GM12878 (cell line): ENCODE measurements at regions of chr2 and their contacts with region 1.

Region 1: GRCh38 chr2:109663721-109664120 is 49.6 kb downstream of the SOWAHC start:
- DNase-seq: no peak
- ATAC-seq: no peak
- H3K4me3 ChIP-seq: no peak overlapping the region
- H3K27ac ChIP-seq: no peak overlapping the region
- H3K4me1 ChIP-seq: no peaks in the 10 kb centered on the region
- H3K27me3 ChIP-seq: no peaks in the 10 kb centered on the region
- CTCF ChIP-seq: no peak
- EP300 ChIP-seq: no peak
- POLR2A ChIP-seq: no peak
- RAD21 ChIP-seq: no peak

Region 2: DNA sequence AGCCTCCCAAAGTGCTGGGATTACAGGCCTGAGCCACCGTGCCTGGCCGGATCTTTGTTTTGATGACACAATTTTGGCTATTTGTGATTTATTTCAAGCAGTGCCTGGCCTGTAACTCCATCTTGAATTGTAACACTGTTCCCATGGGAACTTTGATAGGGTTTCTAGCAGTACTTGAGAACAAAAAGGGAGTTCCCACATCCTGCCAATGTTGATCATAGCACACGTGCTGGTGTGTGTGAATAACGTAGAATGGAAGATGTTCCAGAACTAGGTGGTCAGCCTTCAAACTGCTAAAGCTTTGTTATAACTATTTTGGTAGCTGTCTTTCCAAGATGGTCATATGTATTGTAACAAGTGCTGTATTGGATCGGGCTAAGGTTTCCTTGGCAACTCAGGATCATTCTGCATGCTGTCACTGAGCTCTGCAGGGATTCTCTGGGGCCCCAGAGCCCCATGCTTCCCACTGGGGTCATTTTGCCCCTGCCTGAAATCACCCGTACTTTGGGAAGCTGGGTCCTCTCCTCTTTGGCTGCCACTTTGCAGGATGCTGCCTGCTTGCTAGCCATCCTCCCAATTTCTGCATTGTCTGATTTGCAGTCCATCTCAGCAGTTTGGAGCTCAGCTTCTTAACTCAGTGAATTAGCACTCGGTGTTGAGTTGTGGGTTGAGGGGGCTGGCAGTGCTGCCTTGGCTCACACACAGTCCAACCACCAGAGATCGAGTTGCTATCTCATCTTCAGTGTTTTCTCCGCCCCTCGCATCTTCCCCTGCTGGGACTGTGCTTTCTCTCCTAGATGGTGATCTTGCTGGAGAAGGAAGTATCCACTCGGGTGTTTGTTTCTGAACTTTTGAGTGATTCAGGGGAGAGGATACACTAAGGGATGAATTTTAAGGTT is 507.9 kb before region 1 on chr2:
- CTCF ChIA-PET with region 1: no interaction called
- POLR2A ChIA-PET with region 1: no interaction called
- RAD21 ChIA-PET with region 1: no interaction called
- SMC1A ChIA-PET with region 1: no interaction called
- in situ Hi-C with region 1: no loop called
- intact Hi-C with region 1: no loop called
- DNase-seq: no peak
- ATAC-seq: no peak
- H3K4me3 ChIP-seq: no peak overlapping the region
- H3K27ac ChIP-seq: no peak overlapping the region
- H3K4me1 ChIP-seq: no peaks in the 10 kb centered on the region
- H3K27me3 ChIP-seq: no peaks in the 10 kb centered on the region
- CTCF ChIP-seq: no peak
- EP300 ChIP-seq: no peak
- POLR2A ChIP-seq: no peak
- RAD21 ChIP-seq: no peak

Region 3: DNA sequence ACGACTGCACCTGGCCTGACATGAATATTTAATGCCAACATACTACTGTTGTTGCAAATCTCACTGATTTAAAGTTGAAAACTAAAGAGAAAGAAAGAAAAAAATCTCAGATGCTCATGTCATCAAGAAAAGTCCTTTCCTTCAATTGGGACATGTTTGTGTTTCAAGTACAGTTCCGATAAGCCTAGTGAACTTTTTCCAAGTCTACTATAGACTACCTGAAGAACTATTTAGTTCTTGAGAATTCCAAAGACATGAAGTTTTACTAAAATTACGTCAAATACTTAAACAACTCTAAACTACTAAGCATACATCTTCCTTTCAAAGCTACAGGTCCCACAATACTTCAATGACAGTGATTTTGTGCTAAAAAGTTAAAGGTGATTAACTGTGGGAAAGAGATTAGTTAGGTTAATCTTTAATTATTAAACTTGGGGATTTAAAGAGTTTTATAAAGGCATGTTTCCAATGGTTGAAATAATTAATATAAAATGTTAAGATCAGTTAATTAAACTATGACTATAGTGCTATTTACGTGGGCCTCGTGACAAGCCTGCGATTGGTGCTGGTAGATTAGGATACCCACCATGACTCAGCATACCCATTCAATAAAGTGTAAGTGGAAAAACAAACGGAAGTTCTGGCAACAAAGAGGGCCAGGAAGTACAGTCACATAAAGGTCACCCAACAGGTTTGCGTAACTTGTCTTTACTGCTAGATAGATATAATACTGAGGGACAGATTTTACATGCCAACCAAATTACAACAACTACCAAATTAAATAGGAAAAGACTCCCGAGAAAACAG is 105.4 kb before region 1 on chr2:
- CTCF ChIA-PET with region 1: no interaction called
- POLR2A ChIA-PET with region 1: no interaction called
- RAD21 ChIA-PET with region 1: no interaction called
- SMC1A ChIA-PET with region 1: interaction called, 11 read pairs
- in situ Hi-C with region 1: no loop called
- intact Hi-C with region 1: no loop called
- DNase-seq: no peak
- ATAC-seq: no peak
- H3K4me3 ChIP-seq: no peak overlapping the region
- H3K27ac ChIP-seq: no peak overlapping the region
- H3K4me1 ChIP-seq: no peaks in the 10 kb centered on the region; the same call in 1 of the 2 replicates
- H3K27me3 ChIP-seq: no peaks in the 10 kb centered on the region
- CTCF ChIP-seq: no peak
- EP300 ChIP-seq: no peak
- POLR2A ChIP-seq: no peak
- RAD21 ChIP-seq: no peak

Region 4: DNA sequence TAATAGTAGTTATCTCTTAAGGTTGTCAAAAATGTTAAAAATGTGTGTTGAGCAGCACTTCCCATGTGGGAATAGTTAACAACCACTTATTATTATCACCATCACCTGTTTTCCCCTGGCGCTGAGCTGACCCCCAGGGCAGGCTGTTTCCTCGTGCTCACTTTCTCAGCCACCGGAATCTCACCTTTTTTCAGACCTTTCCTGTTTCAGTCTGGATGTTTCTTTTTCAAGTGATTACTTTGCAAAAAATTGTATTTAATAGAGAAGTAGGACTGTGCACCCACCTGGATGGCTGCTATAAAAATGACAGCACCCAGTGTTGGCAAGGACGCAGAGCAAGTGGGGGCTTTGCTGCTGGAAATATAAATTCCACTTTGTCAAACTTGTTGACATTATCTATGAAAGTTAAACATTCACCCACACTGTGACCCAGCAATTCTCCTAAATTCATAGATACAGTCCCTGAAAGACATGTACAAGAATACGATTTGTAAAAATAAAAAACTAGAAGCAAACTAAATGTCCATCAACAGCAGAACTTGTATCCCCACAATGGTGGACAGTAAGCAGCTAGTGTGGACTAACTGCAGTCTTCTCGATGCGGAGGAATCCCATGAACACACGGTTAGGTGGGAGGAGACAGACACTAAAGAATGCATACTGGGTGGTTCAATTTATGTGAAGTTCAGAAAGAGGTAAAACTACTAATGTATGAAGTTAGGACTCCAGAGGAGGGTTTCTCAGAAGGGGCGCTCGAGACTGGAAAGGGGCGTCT is 17.0 kb after region 1 on chr2:
- CTCF ChIA-PET with region 1: no interaction called
- POLR2A ChIA-PET with region 1: no interaction called
- RAD21 ChIA-PET with region 1: no interaction called
- SMC1A ChIA-PET with region 1: no interaction called
- in situ Hi-C with region 1: no loop called
- intact Hi-C with region 1: no loop called
- DNase-seq: no peak
- ATAC-seq: no peak
- H3K4me3 ChIP-seq: no peak overlapping the region
- H3K27ac ChIP-seq: no peak overlapping the region
- H3K4me1 ChIP-seq: no peaks in the 10 kb centered on the region; the same call in 1 of the 2 replicates
- H3K27me3 ChIP-seq: no peaks in the 10 kb centered on the region; a peak in 1 of 4 replicates
- CTCF ChIP-seq: no peak
- EP300 ChIP-seq: no peak
- POLR2A ChIP-seq: no peak
- RAD21 ChIP-seq: no peak

Region 5: DNA sequence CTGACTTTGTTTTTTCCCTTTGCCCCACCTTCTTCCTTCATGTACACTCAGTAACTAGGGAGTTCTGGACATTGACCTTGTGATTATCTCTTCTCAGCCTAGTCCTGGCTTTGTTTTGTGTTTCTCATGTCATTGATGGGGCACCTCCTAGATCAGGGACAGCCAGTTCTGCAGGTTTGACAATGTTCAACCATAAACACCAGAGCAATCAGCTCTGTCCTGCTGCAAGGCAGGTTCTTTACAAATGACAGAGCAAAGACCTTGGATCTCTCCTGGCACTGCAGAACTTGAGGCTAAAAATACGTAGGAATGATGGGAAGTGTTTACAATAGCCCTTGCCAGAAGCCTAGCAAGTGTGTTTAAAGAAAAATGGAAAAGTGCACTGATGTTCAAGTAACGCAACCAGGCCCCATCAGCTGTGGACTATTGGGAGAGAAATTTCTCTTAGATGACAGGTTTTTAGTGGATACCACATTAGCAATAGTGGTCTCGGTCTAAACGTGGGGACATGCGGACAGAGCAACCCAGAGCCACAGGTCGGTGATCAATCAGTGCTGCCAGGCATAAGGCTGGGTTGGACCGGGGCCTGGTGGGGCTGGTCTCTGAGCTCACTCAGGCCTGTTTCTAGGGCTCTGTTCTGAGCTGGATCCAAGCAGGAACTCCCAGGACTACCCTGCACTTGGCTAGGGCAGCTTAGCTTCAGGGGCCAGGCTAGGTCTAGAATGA is 27.3 kb after region 1 on chr2:
- CTCF ChIA-PET with region 1: no interaction called
- POLR2A ChIA-PET with region 1: no interaction called
- RAD21 ChIA-PET with region 1: no interaction called
- SMC1A ChIA-PET with region 1: no interaction called
- in situ Hi-C with region 1: no loop called
- intact Hi-C with region 1: no loop called
- DNase-seq: no peak
- ATAC-seq: no peak
- H3K4me3 ChIP-seq: no peak overlapping the region
- H3K27ac ChIP-seq: no peak overlapping the region
- H3K4me1 ChIP-seq: no peaks in the 10 kb centered on the region
- H3K27me3 ChIP-seq: no peaks in the 10 kb centered on the region
- CTCF ChIP-seq: no peak
- EP300 ChIP-seq: no peak
- POLR2A ChIP-seq: no peak
- RAD21 ChIP-seq: no peak